Sigmoid colon (tissue), 7 donors: ENCODE measurements at regions of chr14 and their contacts with region 1.

Region 1: DNA sequence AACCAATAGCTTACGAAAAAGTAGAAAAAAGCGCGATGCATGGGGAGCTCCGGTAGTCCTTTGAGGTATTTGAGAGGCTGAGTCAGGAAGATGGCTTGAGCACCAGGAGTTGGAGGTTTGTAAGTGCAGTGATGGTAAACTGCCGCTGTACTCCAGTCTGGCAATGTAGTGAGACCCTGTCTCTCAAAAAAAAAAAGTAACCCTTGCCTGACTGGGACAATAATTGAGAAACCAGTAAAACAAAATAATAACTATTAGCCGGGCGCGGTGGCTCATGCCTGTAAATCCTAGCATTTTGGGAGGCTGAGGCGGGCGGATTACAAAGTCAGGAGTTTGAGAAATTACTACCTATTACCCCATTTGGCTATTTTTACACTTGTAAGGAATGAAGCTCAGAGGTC is 632 bp upstream of the ACOT2 start:
- DNase-seq: no peak
- H3K4me3 ChIP-seq: peak overlapping the region; percentile 55 to 82 (median 68)
- H3K27ac ChIP-seq: peak overlapping the region; percentile 86 to 97 (median 92)
- H3K4me1 ChIP-seq: peaks cover 0 to 39% (median 6%) of the 10 kb centered on the region in 4 donors
- H3K27me3 ChIP-seq: no peaks in the 10 kb centered on the region
- CTCF ChIP-seq: no peak
- EP300 ChIP-seq: no peak
- POLR2A ChIP-seq: no peak

Region 2: DNA sequence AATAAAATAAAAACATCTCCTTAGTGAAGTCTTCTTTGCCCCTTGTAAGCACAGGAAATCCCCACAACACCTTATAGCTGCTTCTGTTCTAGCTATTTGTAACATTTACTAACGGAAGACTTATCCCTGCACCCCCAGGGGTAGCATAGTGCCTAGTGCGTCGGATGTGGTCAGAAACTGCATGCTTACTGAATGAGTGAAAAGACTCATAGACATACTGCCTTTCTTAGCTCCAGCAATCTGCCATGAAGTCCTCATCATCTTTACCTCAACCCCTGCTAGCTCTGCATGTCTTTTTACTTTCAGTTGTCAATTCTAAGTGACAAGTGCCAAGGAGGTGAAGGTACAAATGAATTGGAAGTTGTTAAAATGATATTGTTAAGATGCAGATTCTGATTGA is 64.7 kb before region 1 on chr14:
- intact Hi-C with region 1: loop called (anchors 5 kb)
- DNase-seq: no peak
- H3K4me3 ChIP-seq: no peak overlapping the region
- H3K27ac ChIP-seq: no peak overlapping the region
- H3K4me1 ChIP-seq: no peaks in the 10 kb centered on the region
- H3K27me3 ChIP-seq: no peaks in the 10 kb centered on the region
- CTCF ChIP-seq: no peak
- EP300 ChIP-seq: no peak
- POLR2A ChIP-seq: no peak

Region 3: DNA sequence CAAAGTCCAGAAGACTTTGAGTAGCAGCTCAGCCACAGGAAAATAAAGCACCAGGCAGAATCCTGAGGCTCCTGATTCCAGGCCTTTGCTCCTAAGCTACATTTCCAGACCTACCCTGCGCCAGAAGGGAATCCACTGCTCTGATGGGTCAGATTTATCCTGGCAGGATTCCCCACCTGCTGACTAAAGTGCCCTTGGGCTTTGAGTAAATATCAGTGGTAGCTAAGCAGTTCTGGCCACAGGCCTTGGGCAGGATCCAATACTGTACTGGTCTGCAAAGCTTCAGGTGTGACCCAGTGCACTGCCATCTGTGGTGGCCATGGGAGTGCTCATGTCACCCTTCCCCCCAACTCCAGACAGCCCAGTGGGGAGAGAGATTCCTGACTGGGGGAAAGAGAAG is 41.8 kb before region 1 on chr14:
- intact Hi-C with region 1: loop called (anchors 5 kb)
- DNase-seq: peak; percentile 80
- H3K4me3 ChIP-seq: no peak overlapping the region
- H3K27ac ChIP-seq: peak overlapping the region; percentile 11 to 70 (median 51)
- H3K4me1 ChIP-seq: peaks cover 0 to 12% (median 11%) of the 10 kb centered on the region in 4 donors
- H3K27me3 ChIP-seq: no peaks in the 10 kb centered on the region
- CTCF ChIP-seq: no peak
- EP300 ChIP-seq: no peak
- POLR2A ChIP-seq: no peak

Region 4: DNA sequence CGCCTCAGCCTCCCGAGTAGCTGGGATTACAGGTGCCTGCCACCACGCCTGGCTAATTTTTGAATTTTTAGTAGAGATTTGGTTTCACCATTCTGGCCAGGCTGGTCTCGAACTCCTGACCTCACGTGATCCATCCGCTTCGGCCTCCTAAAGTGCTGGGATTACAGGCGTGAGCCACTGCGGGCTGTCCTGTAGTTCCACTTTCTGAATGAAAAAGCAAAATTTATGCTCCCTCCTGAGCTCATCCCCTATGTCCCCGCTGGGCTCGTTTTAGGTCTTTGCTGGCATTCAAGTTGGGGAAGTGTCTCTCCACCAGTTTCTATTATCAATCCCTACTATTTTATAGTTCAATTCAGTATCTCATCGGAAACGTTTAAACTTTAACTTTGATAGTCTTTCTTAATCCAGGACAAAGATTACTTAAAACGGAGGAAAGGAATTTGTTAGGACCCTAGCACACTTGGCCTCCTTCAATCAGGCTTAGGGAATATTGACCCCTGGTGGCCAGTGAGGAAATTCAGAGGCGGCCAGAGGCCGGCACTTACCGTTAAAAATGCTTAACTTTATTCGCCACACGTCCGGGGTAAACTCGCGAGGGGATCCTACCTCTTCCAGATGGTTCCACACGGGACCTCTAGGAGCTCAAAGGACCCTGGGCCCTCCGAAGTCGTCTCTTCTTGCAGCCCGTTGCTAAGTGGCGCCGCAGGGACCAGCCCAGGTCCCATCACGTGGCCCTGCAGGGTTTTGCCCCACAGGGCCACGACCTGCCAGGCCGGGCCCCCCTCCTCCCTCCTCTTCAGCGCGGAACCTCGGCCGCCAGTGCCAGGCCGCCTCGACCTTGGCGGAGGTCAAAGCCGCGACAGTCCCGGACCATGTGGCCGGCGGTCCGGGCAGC is 65.0 kb after region 1 on chr14:
- intact Hi-C with region 1: loop called (anchors 5 kb)
- DNase-seq: peak; percentile 79
- H3K4me3 ChIP-seq: peak overlapping the region; percentile 33 to 62 (median 52)
- H3K27ac ChIP-seq: peak overlapping the region; percentile 33 to 70 (median 59)
- H3K4me1 ChIP-seq: peaks cover 0 to 16% (median 6%) of the 10 kb centered on the region in 4 donors
- H3K27me3 ChIP-seq: no peaks in the 10 kb centered on the region
- CTCF ChIP-seq: peak; percentile 78 to 87 (median 84)
- EP300 ChIP-seq: no peak
- POLR2A ChIP-seq: no peak